ENCODE measurements at regions of chr1 and their contacts with region 1.

Region 1: DNA sequence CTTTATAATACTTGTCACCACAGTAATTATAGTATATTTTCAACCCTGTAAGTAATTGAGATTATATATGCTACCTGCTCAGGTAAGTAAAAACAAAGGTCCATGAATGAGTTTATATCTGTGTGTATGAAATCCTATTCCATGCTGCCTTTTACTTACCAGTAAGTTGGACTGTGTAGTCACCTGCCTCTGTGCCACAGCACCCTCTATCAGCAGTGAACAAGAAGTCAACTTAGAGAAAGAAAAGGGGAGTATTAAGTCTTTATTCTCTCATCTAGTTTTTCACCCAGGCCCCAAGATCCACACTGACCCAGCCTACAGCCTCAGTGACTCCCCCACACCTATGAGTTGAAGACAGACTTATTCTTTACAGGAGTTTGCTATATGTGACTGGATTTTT is 36.9 kb upstream of the IFI16 start:
- DNase-seq: no peak
- H3K4me3 Mint-ChIP-seq: no peak overlapping the region
- H3K27ac Mint-ChIP-seq: no peak overlapping the region
- H3K4me1 Mint-ChIP-seq: peaks cover 33% of the 10 kb centered on the region
- H3K27me3 Mint-ChIP-seq: no peaks in the 10 kb centered on the region

Region 2: DNA sequence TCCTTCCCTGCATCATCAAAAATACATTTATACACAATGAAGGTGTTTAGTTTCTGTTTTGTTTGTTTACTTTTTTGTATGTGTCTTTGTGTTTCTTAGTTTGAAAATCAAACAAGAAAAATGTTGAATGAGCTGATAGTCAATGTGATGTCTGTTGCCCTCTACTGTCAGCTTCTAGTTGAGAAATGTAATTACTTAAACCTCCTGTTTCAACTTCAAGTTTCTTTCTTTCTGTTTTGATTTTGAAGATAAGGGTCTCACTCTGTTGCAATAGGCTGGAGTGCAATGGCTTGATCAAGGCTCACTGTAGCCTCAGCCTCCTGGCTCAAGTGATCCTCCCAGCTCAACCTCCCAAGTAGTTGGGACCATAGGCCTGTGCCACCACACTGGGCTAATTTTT is 323.8 kb before region 1 on chr1:
- intact Hi-C with region 1: loop called (anchors 10 kb)
- DNase-seq: no peak
- H3K4me3 Mint-ChIP-seq: no peak overlapping the region
- H3K27ac Mint-ChIP-seq: no peak overlapping the region
- H3K4me1 Mint-ChIP-seq: peaks cover 14% of the 10 kb centered on the region
- H3K27me3 Mint-ChIP-seq: peaks cover 11% of the 10 kb centered on the region

Region 3: GRCh38 chr1:158793604-158794003 is 179.2 kb before region 1 on chr1:
- intact Hi-C with region 1: loop called (anchors 2 kb)
- DNase-seq: peak; percentile 18
- H3K4me3 Mint-ChIP-seq: no peak overlapping the region
- H3K27ac Mint-ChIP-seq: no peak overlapping the region
- H3K4me1 Mint-ChIP-seq: no peaks in the 10 kb centered on the region
- H3K27me3 Mint-ChIP-seq: peaks cover 25% of the 10 kb centered on the region

Region 4: GRCh38 chr1:158830904-158831507 is 141.8 kb before region 1 on chr1 and contains the start of gene MNDA:
- intact Hi-C with region 1: loop called (anchors 2 kb)
- DNase-seq: no peak
- H3K4me3 Mint-ChIP-seq: no peak within 1 kb of the TSS
- H3K27ac Mint-ChIP-seq: peak within 1 kb of the TSS; percentile 64
- H3K4me1 Mint-ChIP-seq: peaks cover 20% of the 10 kb centered on the region
- H3K27me3 Mint-ChIP-seq: no peaks in the 10 kb centered on the region
- total RNA-seq, gene MNDA: not detected in 2 replicates

Region 5: DNA sequence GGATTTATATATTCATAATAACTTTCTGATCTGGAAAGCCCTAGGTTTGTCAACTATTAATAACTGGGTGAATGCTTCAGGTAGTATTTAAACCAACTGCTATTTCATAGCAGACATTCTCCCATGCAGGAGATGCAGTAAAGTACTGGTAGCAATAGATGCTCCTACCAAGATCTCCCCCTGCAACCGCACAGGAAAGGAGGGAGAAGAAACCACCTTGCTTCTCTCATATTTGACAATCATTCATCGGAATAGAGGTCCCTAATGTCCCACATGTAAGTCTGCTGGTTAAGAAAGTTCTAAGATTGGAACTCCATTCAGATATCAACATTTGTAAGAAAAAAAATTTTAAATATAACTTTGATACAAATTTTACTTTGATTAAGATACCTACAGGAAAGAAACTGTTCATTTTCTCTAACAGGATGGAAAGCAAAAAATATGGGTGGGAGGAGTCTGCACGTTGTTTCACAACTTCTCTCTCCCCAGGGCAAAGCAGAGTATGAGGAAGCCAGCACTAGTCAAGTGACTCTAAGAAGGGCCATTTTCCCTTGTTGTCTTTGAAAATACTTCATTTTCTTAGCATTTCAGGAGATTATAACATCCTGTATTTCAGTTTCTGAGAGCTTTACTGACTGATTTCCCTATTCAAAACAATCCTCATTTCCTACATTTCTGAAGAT is 41.6 kb before region 1 on chr1 and contains the start of gene PYHIN1:
- intact Hi-C with region 1: loop called (anchors 1 kb)
- DNase-seq: peak; percentile 20
- H3K4me3 Mint-ChIP-seq: peak within 1 kb of the TSS; percentile 91
- H3K27ac Mint-ChIP-seq: peak within 1 kb of the TSS; percentile 91
- H3K4me1 Mint-ChIP-seq: peaks cover 35% of the 10 kb centered on the region
- H3K27me3 Mint-ChIP-seq: no peaks in the 10 kb centered on the region
- total RNA-seq, gene PYHIN1: 7.4 and 10.0 TPM in 2 replicates

Region 6: DNA sequence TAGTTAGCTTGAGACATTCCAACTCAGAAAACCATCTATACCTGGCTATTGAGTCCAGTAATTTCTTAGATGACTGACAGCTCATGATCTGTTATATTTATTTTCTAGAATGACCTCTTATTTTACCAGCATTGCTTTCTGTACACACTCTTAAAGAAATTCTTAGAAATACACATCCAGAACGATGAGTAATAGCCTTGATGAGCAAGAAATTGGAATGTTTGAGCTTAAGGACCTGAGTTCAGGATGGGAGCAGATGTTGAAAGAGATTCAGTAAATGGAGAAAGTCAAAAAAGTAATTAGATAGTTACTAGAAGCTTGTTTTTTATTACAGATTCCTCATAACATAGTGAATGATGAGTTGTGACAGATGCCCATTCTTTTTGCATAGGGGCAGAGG is 29.8 kb before region 1 on chr1:
- intact Hi-C with region 1: loop called (anchors 2 kb)
- DNase-seq: no peak
- H3K4me3 Mint-ChIP-seq: no peak overlapping the region
- H3K27ac Mint-ChIP-seq: no peak overlapping the region
- H3K4me1 Mint-ChIP-seq: peaks cover 13% of the 10 kb centered on the region
- H3K27me3 Mint-ChIP-seq: no peaks in the 10 kb centered on the region

Region 7: GRCh38 chr1:158998781-158999161 is 25.9 kb after region 1 on chr1:
- intact Hi-C with region 1: no loop called
- DNase-seq: peak; percentile 33
- H3K4me3 Mint-ChIP-seq: peak overlapping the region; percentile 43
- H3K27ac Mint-ChIP-seq: no peak overlapping the region
- H3K4me1 Mint-ChIP-seq: peaks cover 31% of the 10 kb centered on the region
- H3K27me3 Mint-ChIP-seq: no peaks in the 10 kb centered on the region

Region 8: DNA sequence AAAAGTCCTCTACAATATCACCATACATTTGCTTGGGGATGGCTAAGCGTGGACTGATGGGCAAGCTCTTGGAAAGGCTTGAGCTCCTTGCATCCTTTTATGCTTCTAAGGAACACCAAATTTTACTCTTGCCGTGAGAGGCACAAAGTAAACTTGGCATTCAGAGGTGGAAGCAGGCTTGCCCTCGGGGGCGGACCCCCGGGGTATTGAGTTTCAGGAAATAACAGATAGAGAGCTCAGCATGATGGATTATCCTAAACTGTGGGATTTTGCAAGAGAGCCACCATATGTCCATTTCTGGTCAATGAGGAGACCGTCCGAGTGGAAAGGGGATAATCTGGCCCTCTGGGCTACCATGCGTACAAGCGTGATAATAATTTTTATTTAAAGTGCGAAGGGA is 50.9 kb after region 1 on chr1:
- intact Hi-C with region 1: no loop called
- DNase-seq: no peak
- H3K4me3 Mint-ChIP-seq: no peak overlapping the region
- H3K27ac Mint-ChIP-seq: peak overlapping the region; percentile 17
- H3K4me1 Mint-ChIP-seq: peaks cover 70% of the 10 kb centered on the region
- H3K27me3 Mint-ChIP-seq: no peaks in the 10 kb centered on the region

Region 9: GRCh38 chr1:159077120-159077961 is 104.5 kb after region 1 on chr1:
- intact Hi-C with region 1: loop called (anchors 1 kb)
- DNase-seq: peak; percentile 95
- H3K4me3 Mint-ChIP-seq: peak overlapping the region; percentile 89
- H3K27ac Mint-ChIP-seq: peak overlapping the region; percentile 98
- H3K4me1 Mint-ChIP-seq: peaks cover 37% of the 10 kb centered on the region
- H3K27me3 Mint-ChIP-seq: no peaks in the 10 kb centered on the region